Naive thymus-derived CD4-positive, alpha-beta T cell (primary cell): ENCODE measurements at regions of chr2 and their contacts with region 1.

Region 1: GRCh38 chr2:84925724-84926376 is 20.4 kb downstream of the TMSB10 start:
- DNase-seq: peak; percentile 94 to 99 (median 97)
- ATAC-seq: peak; percentile 90
- H3K4me3 ChIP-seq: peak overlapping the region; percentile 77
- H3K4me3 Mint-ChIP-seq: peak overlapping the region; percentile 91 to 100 (median 94)
- H3K27ac ChIP-seq: peak overlapping the region; percentile 69
- H3K27ac Mint-ChIP-seq: peak overlapping the region; percentile 91 to 100 (median 96)
- H3K4me1 ChIP-seq: peaks cover 23 to 29% of the 10 kb centered on the region in 2 donors
- H3K4me1 Mint-ChIP-seq: peaks cover 25 to 55% (median 47%) of the 10 kb centered on the region in 7 donors
- H3K27me3 ChIP-seq: no peaks in the 10 kb centered on the region
- H3K27me3 Mint-ChIP-seq: no peaks in the 10 kb centered on the region

Region 2: DNA sequence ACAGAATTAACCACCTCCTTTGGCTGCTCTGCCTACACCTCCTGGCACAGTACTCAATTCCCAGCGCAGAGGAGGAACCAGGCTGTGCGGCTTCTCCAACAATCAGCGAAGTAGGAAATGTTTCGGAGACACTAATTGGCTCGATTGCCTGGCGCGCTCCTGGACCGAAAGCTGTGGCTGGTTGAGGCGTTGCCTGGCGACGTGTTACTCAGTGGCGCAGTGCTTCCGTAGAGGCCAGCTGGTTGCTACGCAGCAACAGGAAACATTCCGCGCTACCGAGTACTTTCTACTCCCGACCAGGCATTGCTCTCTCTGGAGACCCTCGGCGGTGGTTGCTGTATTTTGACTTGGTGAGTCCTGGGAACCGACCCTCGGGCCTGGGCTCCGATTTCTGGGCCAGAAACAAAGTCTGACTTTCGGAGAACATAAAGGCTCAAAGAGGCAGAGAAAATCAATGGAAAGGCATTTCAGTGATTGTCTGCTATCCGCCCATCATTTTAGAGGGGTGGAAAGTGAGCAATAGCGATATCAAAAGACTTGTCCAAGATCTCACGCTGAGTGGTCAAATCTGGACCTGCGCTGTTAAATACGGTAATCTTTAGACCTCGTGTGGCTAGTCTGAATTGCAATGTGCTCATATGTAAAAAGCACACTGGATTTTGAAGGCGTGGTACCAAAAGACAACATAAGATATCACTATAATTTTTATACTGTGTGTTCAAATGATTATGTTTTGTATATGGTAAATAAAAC is 409.4 kb before region 1 on chr2 and contains the start of gene DNAH6:
- CTCF ChIA-PET with region 1: interaction called, 3 read pairs
- POLR2A ChIA-PET with region 1: interaction called, 3 read pairs
- intact Hi-C with region 1: loop called (anchors 1 to 5 kb)
- DNase-seq: peak; percentile 67 to 94 (median 89)
- ATAC-seq: peak; percentile 99
- H3K4me3 ChIP-seq: peak within 1 kb of the TSS; percentile 78
- H3K4me3 Mint-ChIP-seq: peak within 1 kb of the TSS; percentile 79 to 93 (median 90)
- H3K27ac ChIP-seq: peak within 1 kb of the TSS; percentile 75
- H3K27ac Mint-ChIP-seq: peak within 1 kb of the TSS; percentile 66 to 98 (median 93)
- H3K4me1 ChIP-seq: peaks cover 5 to 6% of the 10 kb centered on the region in 2 donors
- H3K4me1 Mint-ChIP-seq: peaks cover 6 to 27% (median 23%) of the 10 kb centered on the region in 7 donors
- H3K27me3 ChIP-seq: no peaks in the 10 kb centered on the region
- H3K27me3 Mint-ChIP-seq: peaks cover 0 to 41% (median 0%) of the 10 kb centered on the region in 5 donors
- total RNA-seq, gene DNAH6: 0.73 to 2.3 (median 1.1) TPM

Region 3: DNA sequence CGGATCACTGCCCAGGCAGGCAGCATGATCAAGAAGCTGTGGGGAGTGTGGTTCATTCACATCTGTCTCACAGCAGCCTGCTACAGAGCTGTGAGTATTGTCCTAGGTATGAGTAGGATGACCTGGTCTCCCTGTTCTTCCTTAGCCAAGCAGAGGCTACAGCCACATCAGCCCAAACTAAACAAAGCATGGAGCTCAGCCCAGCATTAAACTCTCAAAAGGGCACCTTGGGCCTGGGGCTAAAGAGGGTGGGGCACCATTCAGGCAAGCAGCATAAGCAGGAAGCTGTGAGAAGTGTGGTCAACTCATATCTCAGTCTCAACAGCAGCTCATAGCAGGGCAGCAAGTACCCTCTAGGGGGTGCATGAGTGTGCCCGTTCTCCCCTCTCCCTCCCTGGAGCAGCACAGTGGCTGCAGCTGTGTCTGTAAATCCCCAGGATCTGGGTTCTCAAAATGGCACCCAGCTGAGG is 184.5 kb before region 1 on chr2:
- CTCF ChIA-PET with region 1: interaction called, 12 read pairs
- POLR2A ChIA-PET with region 1: interaction called, 3 read pairs
- intact Hi-C with region 1: loop called in 1 of 2 experiments (anchors 2 kb)
- DNase-seq: peak in 8 of 9 donors; percentile 14 to 43 (median 28)
- ATAC-seq: peak; percentile 94
- H3K4me3 ChIP-seq: no peak overlapping the region
- H3K4me3 Mint-ChIP-seq: peak overlapping the region in 4 of 10 donors; percentile 5 to 30 (median 23)
- H3K27ac ChIP-seq: no peak overlapping the region
- H3K27ac Mint-ChIP-seq: peak overlapping the region in 6 of 9 donors; percentile 7 to 71 (median 38)
- H3K4me1 ChIP-seq: peaks cover 14 to 17% of the 10 kb centered on the region in 2 donors
- H3K4me1 Mint-ChIP-seq: peaks cover 12 to 75% (median 51%) of the 10 kb centered on the region in 7 donors
- H3K27me3 ChIP-seq: no peaks in the 10 kb centered on the region
- H3K27me3 Mint-ChIP-seq: peaks cover 0 to 21% (median 0%) of the 10 kb centered on the region in 5 donors

Region 4: GRCh38 chr2:84856787-84857186 is 69.1 kb before region 1 on chr2:
- CTCF ChIA-PET with region 1: interaction called, 22 read pairs
- POLR2A ChIA-PET with region 1: interaction called, 12 read pairs
- intact Hi-C with region 1: no loop called
- DNase-seq: peak in 2 of 9 donors; percentile 31 to 49
- ATAC-seq: peak; percentile 73
- H3K4me3 ChIP-seq: no peak overlapping the region
- H3K4me3 Mint-ChIP-seq: peak overlapping the region; percentile 54 to 89 (median 85)
- H3K27ac ChIP-seq: peak overlapping the region; percentile 72
- H3K27ac Mint-ChIP-seq: peak overlapping the region; percentile 85 to 99 (median 96)
- H3K4me1 ChIP-seq: peaks cover 53 to 95% of the 10 kb centered on the region in 2 donors
- H3K4me1 Mint-ChIP-seq: peaks cover 72 to 98% (median 96%) of the 10 kb centered on the region in 7 donors
- H3K27me3 ChIP-seq: no peaks in the 10 kb centered on the region
- H3K27me3 Mint-ChIP-seq: no peaks in the 10 kb centered on the region

Region 5: GRCh38 chr2:84894758-84895520 is 30.9 kb before region 1 on chr2:
- CTCF ChIA-PET with region 1: interaction called, 49 read pairs
- POLR2A ChIA-PET with region 1: interaction called, 495 read pairs
- intact Hi-C with region 1: no loop called
- DNase-seq: peak in 6 of 9 donors; percentile 36 to 61 (median 53)
- ATAC-seq: peak; percentile 70
- H3K4me3 ChIP-seq: peak overlapping the region; percentile 40
- H3K4me3 Mint-ChIP-seq: peak overlapping the region; percentile 47 to 82 (median 71)
- H3K27ac ChIP-seq: peak overlapping the region; percentile 77
- H3K27ac Mint-ChIP-seq: peak overlapping the region; percentile 53 to 99 (median 93)
- H3K4me1 ChIP-seq: peaks cover 37 to 47% of the 10 kb centered on the region in 2 donors
- H3K4me1 Mint-ChIP-seq: peaks cover 40 to 71% (median 64%) of the 10 kb centered on the region in 7 donors
- H3K27me3 ChIP-seq: no peaks in the 10 kb centered on the region
- H3K27me3 Mint-ChIP-seq: no peaks in the 10 kb centered on the region

Region 6: GRCh38 chr2:84970868-84971509 is 45.1 kb after region 1 on chr2 and contains the start of gene KCMF1:
- CTCF ChIA-PET with region 1: interaction called, 11 read pairs
- POLR2A ChIA-PET with region 1: interaction called, 11 read pairs
- intact Hi-C with region 1: loop called (anchors 1 kb)
- DNase-seq: peak; percentile 56 to 83 (median 68)
- ATAC-seq: peak; percentile 72
- H3K4me3 ChIP-seq: peak within 1 kb of the TSS; percentile 85
- H3K4me3 Mint-ChIP-seq: peak within 1 kb of the TSS; percentile 89 to 100 (median 99)
- H3K27ac ChIP-seq: peak within 1 kb of the TSS; percentile 95
- H3K27ac Mint-ChIP-seq: peak within 1 kb of the TSS; percentile 97 to 100 (median 99)
- H3K4me1 ChIP-seq: peaks cover 31 to 33% of the 10 kb centered on the region in 2 donors
- H3K4me1 Mint-ChIP-seq: peaks cover 44 to 67% (median 57%) of the 10 kb centered on the region in 7 donors
- H3K27me3 ChIP-seq: no peaks in the 10 kb centered on the region
- H3K27me3 Mint-ChIP-seq: peaks cover 0 to 4% (median 0%) of the 10 kb centered on the region in 5 donors
- total RNA-seq, gene KCMF1: 57.7 to 81.3 (median 60.8) TPM